ENCODE measurements at regions of chr17 and their contacts with region 1.

Region 1: GRCh38 chr17:33038740-33039139 is 47.1 kb downstream of the SPACA3 start:
- DNase-seq: peak; percentile 54
- H3K4me3 ChIP-seq: no peak overlapping the region
- H3K27ac ChIP-seq: no peak overlapping the region
- H3K4me1 ChIP-seq: peaks cover 26% of the 10 kb centered on the region
- H3K27me3 ChIP-seq: no peaks in the 10 kb centered on the region
- CTCF ChIP-seq: peak; percentile 86 to 87

Region 2: DNA sequence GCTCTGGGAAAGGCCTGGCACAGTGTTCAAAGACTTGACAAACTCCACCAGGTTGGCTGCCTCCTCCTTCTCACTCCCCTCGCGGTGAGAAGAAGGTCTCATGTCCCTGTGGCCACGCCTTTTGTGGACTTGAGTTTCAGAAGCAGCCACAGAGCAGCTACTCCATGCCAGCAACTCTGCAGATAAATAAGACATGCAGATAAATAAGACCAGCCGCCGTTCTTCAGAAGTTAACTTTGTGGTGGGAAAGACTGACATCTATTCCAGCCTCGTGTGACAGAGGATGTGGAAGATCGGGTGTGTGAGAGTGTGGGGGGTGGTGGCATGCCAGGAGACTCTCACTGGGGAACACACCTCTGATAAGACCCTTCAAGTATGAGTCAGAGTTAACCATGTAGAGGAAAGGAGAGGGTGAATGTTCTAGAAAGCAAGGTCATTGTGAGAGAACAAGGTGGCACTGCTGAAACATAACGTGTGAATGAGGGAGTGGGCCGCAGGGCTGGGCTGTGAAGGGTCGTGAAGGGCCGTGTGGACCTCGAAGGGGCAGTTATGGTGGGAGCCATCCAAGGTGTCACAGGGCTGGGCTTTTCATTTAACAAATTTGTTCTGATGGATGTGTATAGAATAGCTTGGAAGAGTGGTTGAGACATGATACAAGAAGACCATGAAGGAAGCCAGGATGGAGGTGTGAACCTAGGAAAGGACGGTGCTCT is 46.3 kb before region 1 on chr17:
- CTCF ChIA-PET with region 1: no interaction called
- dilution Hi-C with region 1: no loop called
- in situ Hi-C with region 1: no loop called
- intact Hi-C with region 1: no loop called
- DNase-seq: no peak
- H3K4me3 ChIP-seq: no peak overlapping the region
- H3K27ac ChIP-seq: no peak overlapping the region
- H3K4me1 ChIP-seq: no peaks in the 10 kb centered on the region
- H3K27me3 ChIP-seq: no peaks in the 10 kb centered on the region
- CTCF ChIP-seq: no peak

Region 3: GRCh38 chr17:33200587-33200986 is 161.8 kb after region 1 on chr17:
- CTCF ChIA-PET with region 1: no interaction called
- dilution Hi-C with region 1: no loop called
- in situ Hi-C with region 1: no loop called
- intact Hi-C with region 1: loop called (anchors 5 kb)
- DNase-seq: peak; percentile 9
- H3K4me3 ChIP-seq: no peak overlapping the region
- H3K27ac ChIP-seq: no peak overlapping the region
- H3K4me1 ChIP-seq: no peaks in the 10 kb centered on the region
- H3K27me3 ChIP-seq: no peaks in the 10 kb centered on the region
- CTCF ChIP-seq: peak; percentile 14 to 31

Region 4: GRCh38 chr17:33330877-33331276 is 292.1 kb after region 1 on chr17:
- CTCF ChIA-PET with region 1: no interaction called
- dilution Hi-C with region 1: no loop called
- in situ Hi-C with region 1: no loop called
- intact Hi-C with region 1: loop called (anchors 2 kb)
- DNase-seq: no peak
- H3K4me3 ChIP-seq: no peak overlapping the region
- H3K27ac ChIP-seq: no peak overlapping the region
- H3K4me1 ChIP-seq: no peaks in the 10 kb centered on the region
- H3K27me3 ChIP-seq: no peaks in the 10 kb centered on the region
- CTCF ChIP-seq: no peak

Region 5: DNA sequence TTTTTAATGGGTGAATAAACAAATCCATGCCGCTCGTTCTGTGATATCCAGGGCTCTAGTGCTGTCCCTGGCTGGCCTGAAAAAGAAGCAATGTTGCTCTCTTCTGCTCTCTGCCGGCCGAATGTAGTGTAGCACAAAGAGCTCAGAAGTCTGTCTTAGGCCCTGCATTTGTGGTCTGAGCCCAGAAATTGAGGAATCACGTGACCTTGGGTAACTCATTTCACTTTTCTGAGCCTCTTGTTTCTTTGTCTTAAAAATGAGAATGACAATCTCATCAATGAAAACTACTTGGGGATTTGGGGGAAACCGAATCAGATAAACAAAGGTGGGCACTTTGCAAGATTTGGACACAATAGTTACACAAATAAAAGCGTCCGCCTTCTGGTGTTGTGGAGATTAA is 635.9 kb after region 1 on chr17:
- CTCF ChIA-PET with region 1: no interaction called
- dilution Hi-C with region 1: no loop called
- in situ Hi-C with region 1: loop called in 1 of 2 experiments (anchors 10 kb)
- intact Hi-C with region 1: loop called (anchors 1 kb)
- DNase-seq: peak; percentile 46
- H3K4me3 ChIP-seq: no peak overlapping the region
- H3K27ac ChIP-seq: no peak overlapping the region
- H3K4me1 ChIP-seq: no peaks in the 10 kb centered on the region
- H3K27me3 ChIP-seq: no peaks in the 10 kb centered on the region
- CTCF ChIP-seq: peak; percentile 69 to 78